Ascending aorta (tissue), 2 donors: ENCODE measurements at regions of chr17 and their contacts with region 1.

Region 1: GRCh38 chr17:30236766-30237165 is 1.3 kb upstream of the SLC6A4 start:
- DNase-seq: peak in 1 of 2 donors; percentile 79
- H3K4me3 ChIP-seq: peak overlapping the region; percentile 0 to 76
- H3K27ac ChIP-seq: no peak overlapping the region
- H3K4me1 ChIP-seq: peaks cover 0 to 11% of the 10 kb centered on the region in 2 donors
- H3K27me3 ChIP-seq: no peaks in the 10 kb centered on the region
- CTCF ChIP-seq: peak in 2 of 3 experiments; percentile 37 to 51

Region 2: GRCh38 chr17:28366605-28367004 is 1870.2 kb before region 1 on chr17:
- intact Hi-C with region 1: no loop called
- DNase-seq: no peak
- H3K4me3 ChIP-seq: no peak overlapping the region
- H3K27ac ChIP-seq: no peak overlapping the region
- H3K4me1 ChIP-seq: peaks cover 0 to under 1% of the 10 kb centered on the region in 2 donors
- H3K27me3 ChIP-seq: no peaks in the 10 kb centered on the region
- CTCF ChIP-seq: no peak

Region 3: DNA sequence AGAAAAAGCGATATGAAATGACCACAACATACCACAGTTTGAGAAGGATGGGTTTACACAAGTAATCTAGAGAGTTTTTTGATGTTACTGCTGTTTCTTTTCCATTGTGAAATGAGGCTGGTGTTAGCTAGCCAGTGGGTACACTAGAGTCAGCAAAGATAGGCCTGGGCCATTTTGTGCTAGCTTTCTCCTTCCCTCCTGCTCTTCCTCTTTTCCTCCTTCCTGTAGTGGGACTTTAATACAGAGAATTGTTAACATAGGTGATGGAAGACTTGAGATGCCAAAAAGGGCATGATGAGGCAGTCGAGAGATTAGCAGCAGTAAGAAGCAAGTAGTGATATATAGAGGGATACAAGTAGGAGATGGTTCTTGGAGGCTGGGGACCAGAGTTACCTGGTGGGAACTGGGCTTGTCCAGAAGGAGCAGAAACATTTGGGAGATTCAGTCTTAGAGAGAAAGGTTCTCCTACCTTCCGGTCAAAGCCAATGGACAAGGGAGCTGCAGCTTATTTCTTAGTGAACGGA is 112.4 kb before region 1 on chr17:
- intact Hi-C with region 1: loop called (anchors 2 kb)
- DNase-seq: no peak
- H3K4me3 ChIP-seq: no peak overlapping the region
- H3K27ac ChIP-seq: no peak overlapping the region
- H3K4me1 ChIP-seq: peaks cover 0 to 2% of the 10 kb centered on the region in 2 donors
- H3K27me3 ChIP-seq: no peaks in the 10 kb centered on the region
- CTCF ChIP-seq: no peak

Region 4: GRCh38 chr17:30256756-30257506 is 20.2 kb after region 1 on chr17:
- intact Hi-C with region 1: no loop called
- DNase-seq: no peak
- H3K4me3 ChIP-seq: no peak overlapping the region
- H3K27ac ChIP-seq: no peak overlapping the region
- H3K4me1 ChIP-seq: no peaks in the 10 kb centered on the region
- H3K27me3 ChIP-seq: no peaks in the 10 kb centered on the region
- CTCF ChIP-seq: no peak

Region 5: DNA sequence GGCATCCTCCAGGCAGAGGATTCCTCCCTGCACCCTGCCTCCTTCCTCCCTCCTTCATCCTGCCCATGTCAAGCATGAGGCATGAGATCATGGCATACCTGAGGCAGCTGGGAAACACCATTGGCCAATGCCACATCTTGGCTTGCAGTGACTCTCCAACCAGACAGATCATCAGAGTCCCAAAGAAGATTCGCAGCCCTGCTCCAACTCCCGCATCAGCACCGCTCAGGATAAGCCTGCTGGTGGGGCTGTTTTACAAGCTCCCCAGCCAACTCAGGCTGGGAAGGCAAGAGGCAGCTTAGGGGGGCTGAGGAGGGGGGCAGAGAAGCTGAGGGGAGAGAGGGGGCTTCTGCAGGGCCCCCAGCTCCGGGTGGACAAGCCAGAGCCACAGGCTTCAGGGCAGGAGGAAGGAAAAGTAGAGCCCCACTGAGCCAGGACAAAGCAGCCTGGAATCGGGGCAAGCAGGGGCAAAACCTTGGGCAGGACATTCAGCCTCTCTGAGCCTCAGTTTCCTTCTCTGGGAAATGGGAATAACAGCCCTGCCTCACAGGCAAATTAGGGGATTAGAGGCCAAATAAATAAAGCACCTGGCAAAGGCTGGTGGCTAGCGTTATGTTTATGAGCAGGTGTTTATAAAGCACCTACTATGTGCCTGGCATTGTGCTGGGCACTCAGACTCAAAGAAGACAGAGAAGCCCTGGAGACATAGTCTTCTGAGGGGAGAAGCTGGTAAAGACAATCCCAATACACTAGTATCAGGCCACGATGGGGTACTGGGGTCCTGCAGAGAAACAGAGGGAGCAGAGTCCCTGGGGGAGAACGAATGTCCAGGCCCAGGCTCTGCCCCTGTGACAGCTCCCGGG is 328.5 kb after region 1 on chr17:
- intact Hi-C with region 1: no loop called
- DNase-seq: no peak
- H3K4me3 ChIP-seq: no peak overlapping the region
- H3K27ac ChIP-seq: no peak overlapping the region
- H3K4me1 ChIP-seq: no peaks in the 10 kb centered on the region
- H3K27me3 ChIP-seq: no peaks in the 10 kb centered on the region
- CTCF ChIP-seq: no peak